HepG2 (cell line): ENCODE measurements at regions of chr20 and their contacts with region 1.

Region 1: GRCh38 chr20:62121776-62122631 is at the start of gene LSM14B:
- DNase-seq: peak; percentile 95
- ATAC-seq: peak; percentile 60
- H3K4me3 ChIP-seq: peak within 1 kb of the TSS; percentile 85 to 92 (median 87)
- H3K27ac ChIP-seq: peak within 1 kb of the TSS; percentile 86
- H3K4me1 ChIP-seq: peaks cover 63% of the 10 kb centered on the region
- H3K27me3 ChIP-seq: peaks cover 5 to 19% of the 10 kb centered on the region in 2 experiments; a peak in 4 of 5 replicates
- CTCF ChIP-seq: no peak
- EP300 ChIP-seq: peak; percentile 64 to 72; a peak in 3 of 4 replicates
- POLR2A ChIP-seq: peak in 1 of 2 experiments; percentile 68; a peak in 2 of 4 replicates
- RAD21 ChIP-seq: peak; percentile 75
- total RNA-seq, gene LSM14B: 77.7 and 79.2 TPM in 2 replicates

Region 2: GRCh38 chr20:62010551-62011402 is 111.2 kb before region 1 on chr20:
- CTCF ChIA-PET with region 1: no interaction called
- POLR2A ChIA-PET with region 1: interaction called, 3 read pairs
- in situ Hi-C with region 1: no loop called
- intact Hi-C with region 1: loop called (anchors 5 kb)
- DNase-seq: peak; percentile 64
- ATAC-seq: peak; percentile 84
- H3K4me3 ChIP-seq: no peak overlapping the region
- H3K27ac ChIP-seq: no peak overlapping the region
- H3K4me1 ChIP-seq: no peaks in the 10 kb centered on the region
- H3K27me3 ChIP-seq: no peaks in the 10 kb centered on the region
- CTCF ChIP-seq: peak; percentile 93
- EP300 ChIP-seq: no peak
- POLR2A ChIP-seq: no peak
- RAD21 ChIP-seq: peak; percentile 97

Region 3: GRCh38 chr20:62104791-62105345 is 17.1 kb before region 1 on chr20:
- CTCF ChIA-PET with region 1: no interaction called
- POLR2A ChIA-PET with region 1: interaction called, 21 read pairs
- in situ Hi-C with region 1: no loop called
- intact Hi-C with region 1: no loop called
- DNase-seq: no peak
- ATAC-seq: no peak
- H3K4me3 ChIP-seq: no peak overlapping the region
- H3K27ac ChIP-seq: no peak overlapping the region
- H3K4me1 ChIP-seq: peaks cover 13% of the 10 kb centered on the region
- H3K27me3 ChIP-seq: peaks cover 18 to 40% of the 10 kb centered on the region in 2 experiments
- CTCF ChIP-seq: no peak
- EP300 ChIP-seq: no peak
- POLR2A ChIP-seq: no peak
- RAD21 ChIP-seq: no peak

Region 4: GRCh38 chr20:62136283-62137091 is 14.5 kb after region 1 on chr20:
- CTCF ChIA-PET with region 1: no interaction called
- POLR2A ChIA-PET with region 1: interaction called, 86 read pairs
- in situ Hi-C with region 1: no loop called
- intact Hi-C with region 1: loop called (anchors 2 kb)
- DNase-seq: peak; percentile 74
- ATAC-seq: peak; percentile 39
- H3K4me3 ChIP-seq: no peak overlapping the region
- H3K27ac ChIP-seq: peak overlapping the region; percentile 13
- H3K4me1 ChIP-seq: peaks cover 45% of the 10 kb centered on the region
- H3K27me3 ChIP-seq: no peaks in the 10 kb centered on the region
- CTCF ChIP-seq: peak; percentile 88
- EP300 ChIP-seq: no peak
- POLR2A ChIP-seq: peak; percentile 11 to 30; a peak in 1 of 4 replicates
- RAD21 ChIP-seq: peak; percentile 84

Region 5: DNA sequence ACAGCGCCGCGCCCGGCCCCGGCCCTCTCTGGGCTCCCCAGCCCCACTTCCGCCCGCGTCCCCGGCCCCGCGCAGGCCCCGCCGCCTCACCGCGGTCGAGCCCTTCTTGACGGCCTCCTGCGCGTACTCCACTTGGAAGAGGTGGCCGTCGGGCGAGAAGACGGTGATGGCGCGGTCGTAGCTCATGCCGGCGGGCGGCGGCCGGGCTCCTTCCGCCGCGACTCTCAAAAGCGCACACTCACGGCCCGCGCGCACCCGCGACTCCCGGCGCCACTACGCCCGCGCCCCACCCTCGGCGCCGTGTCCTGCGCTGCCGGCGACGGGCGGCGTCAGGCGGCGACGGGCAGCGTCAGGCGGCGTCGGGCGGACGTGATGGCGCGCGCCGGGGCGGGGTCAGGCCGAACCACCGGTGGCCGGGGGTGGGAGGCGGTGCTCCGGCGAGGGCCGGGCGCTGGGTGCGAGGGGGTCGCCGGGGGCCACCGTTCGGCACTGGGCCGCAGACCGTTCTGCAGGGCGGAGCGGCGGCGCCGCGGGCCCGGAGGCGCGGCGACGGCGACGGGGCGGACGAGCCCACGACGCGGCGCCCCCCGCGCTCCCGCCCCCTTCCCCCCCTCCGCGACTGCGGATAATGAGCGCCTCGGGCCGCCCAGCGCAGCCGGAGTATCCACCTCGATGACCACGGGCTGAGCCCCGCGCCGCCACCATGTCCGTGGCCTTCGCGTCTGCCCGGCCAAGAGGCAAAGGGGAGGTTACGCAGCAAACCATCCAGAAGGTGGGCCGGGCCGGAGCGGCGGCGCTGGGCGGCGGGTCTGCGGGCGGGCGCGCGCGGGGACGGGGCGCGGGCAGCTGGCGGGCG is 21.3 kb after region 1 on chr20 and contains the starts of genes PSMA7 and SS18L1:
- CTCF ChIA-PET with region 1: no interaction called
- POLR2A ChIA-PET with region 1: interaction called, 86 read pairs
- in situ Hi-C with region 1: no loop called
- intact Hi-C with region 1: no loop called
- DNase-seq: peak; percentile 84
- ATAC-seq: peak; percentile 71
- H3K4me3 ChIP-seq: peak within 1 kb of the TSS; percentile 87 to 93 (median 88)
- H3K27ac ChIP-seq: peak within 1 kb of the TSS; percentile 72
- H3K4me1 ChIP-seq: peaks cover 59% of the 10 kb centered on the region
- H3K27me3 ChIP-seq: no peaks in the 10 kb centered on the region; a peak in 1 of 5 replicates
- CTCF ChIP-seq: peak; percentile 22; the same call in 1 of the 2 replicates
- EP300 ChIP-seq: no peak
- POLR2A ChIP-seq: peak; percentile 74 to 93
- RAD21 ChIP-seq: peak; percentile 72
- total RNA-seq, gene PSMA7: 531 and 639 TPM in 2 replicates
- total RNA-seq, gene SS18L1: 15.3 and 17.8 TPM in 2 replicates

Region 6: DNA sequence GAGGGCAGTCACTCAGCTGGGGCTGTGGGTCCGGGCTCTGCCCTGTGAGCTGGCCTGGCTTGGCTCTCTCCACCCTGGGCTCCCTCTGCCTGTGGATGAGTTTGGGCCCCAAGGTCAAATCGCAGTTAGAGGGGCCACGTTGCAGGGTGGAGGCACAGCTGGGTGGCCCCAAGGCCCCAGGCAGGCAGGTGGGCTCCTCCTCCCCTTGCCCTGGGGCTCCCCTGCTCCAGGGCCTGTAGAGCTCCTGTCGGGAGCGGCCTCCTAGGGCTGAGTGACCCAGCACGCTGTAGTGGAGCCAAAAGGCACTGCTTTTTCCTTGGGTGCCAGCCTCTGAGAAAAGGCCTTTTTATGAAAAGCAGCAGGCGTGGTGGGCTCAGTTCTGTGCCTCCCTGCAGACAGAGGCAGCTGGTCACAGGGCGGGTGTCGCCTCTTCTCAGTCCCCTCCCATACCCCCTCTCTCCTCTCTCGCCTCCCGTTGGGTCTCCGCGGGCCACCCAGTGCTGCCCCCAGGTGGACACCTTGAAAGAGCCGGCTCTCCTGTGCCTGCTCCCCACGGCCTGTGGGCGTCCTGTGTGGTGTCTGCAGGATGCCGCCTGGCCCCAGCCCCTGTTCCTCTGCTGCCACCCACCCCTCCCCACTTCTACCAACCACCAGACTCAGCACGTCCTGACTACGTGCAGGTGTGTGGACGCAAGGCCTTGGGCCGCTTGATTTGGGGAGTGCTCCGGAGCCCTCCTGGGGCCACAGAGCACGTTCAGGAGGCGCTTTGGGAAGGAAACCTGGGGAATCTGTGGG is 34.8 kb after region 1 on chr20:
- CTCF ChIA-PET with region 1: no interaction called
- POLR2A ChIA-PET with region 1: no interaction called
- in situ Hi-C with region 1: no loop called
- intact Hi-C with region 1: loop called (anchors 5 kb)
- DNase-seq: peak; percentile 78
- ATAC-seq: peak; percentile 90
- H3K4me3 ChIP-seq: peak overlapping the region in 1 of 3 experiments; percentile 44; a peak in 1 of 6 replicates
- H3K27ac ChIP-seq: peak overlapping the region; percentile 56
- H3K4me1 ChIP-seq: peaks cover 37% of the 10 kb centered on the region
- H3K27me3 ChIP-seq: no peaks in the 10 kb centered on the region
- CTCF ChIP-seq: peak; percentile 90
- EP300 ChIP-seq: peak in 1 of 2 experiments; percentile 3; a peak in 1 of 4 replicates
- POLR2A ChIP-seq: no peak
- RAD21 ChIP-seq: peak; percentile 94